Psoas muscle (tissue), 8 donors: ENCODE measurements at regions of chr2 and their contacts with region 1.

Region 1: GRCh38 chr2:102063941-102064678 is 72.3 kb downstream of the IL1R2 start:
- DNase-seq: peak; percentile 92 to 94
- ATAC-seq: peak; percentile 86 to 91 (median 88)
- H3K4me3 ChIP-seq: peak overlapping the region; percentile 39
- H3K27ac ChIP-seq: peak overlapping the region; percentile 95
- H3K4me1 ChIP-seq: peaks cover 74% of the 10 kb centered on the region
- H3K27me3 ChIP-seq: no peaks in the 10 kb centered on the region
- CTCF ChIP-seq: no peak

Region 2: DNA sequence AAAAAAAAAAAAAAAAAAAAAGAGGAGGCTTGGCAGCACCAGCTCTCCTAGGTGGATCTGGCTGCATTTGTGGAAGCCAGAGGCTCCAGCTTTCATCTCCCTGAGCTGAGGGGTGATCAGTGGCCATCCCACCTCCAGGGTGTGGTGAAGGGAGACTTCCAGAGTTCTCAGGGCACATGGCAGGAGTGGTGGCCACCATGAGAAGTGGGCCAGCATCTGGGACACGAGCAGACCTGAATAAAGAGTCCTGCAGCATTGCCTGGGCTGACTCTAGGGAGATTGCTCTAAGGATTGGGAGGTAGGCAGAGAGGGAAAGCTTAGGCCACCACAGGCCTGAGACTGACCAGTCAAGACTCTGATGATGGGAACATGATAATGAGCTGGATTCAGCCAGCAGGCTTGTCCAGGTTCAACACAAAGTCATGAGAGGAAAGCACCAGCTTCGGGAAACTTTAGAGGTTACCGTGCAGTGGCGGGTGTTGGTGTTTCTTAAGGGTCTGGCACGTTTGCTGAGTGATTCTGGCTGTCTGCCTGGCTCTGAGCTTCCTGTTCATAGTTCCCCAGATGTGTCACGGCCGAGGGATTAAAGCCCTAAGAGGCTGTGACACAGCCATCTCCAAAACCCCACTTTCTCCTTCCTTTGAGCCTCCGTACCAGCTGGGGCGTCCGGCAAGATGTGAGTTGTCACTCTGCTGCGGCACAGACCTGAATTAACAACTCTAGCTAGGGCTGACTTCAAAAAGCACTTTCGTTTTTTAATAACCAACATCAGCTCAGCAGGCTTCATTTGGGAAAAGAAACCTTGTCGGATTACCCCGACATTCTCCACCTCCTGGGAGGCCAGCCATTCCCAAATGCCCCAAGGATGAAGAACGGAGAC is 40.1 kb after region 1 on chr2:
- intact Hi-C with region 1: loop called (anchors 5 kb)
- DNase-seq: peak; percentile 82 to 90
- ATAC-seq: peak; percentile 79 to 93 (median 85)
- H3K4me3 ChIP-seq: peak overlapping the region; percentile 62
- H3K27ac ChIP-seq: peak overlapping the region; percentile 81
- H3K4me1 ChIP-seq: peaks cover 41% of the 10 kb centered on the region
- H3K27me3 ChIP-seq: no peaks in the 10 kb centered on the region
- CTCF ChIP-seq: no peak

Region 3: DNA sequence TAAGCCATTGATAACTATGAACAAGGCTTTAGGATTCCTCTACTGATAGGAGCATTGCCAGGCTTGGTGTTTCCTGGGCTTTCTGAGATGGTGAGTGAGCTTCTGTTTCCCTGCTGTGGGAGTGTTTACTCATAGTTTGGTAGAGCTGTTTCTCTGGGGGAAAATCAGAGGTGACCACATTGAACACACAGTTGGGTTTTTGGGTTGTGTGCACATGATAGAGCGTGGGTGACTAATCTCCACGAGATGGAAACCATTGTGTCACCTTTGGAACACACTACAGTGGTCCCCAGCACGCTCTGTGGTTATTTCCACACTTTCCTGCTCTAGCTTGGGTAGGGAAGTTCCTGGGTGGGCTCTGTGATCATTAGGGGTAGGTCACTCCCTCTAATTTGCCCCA is 83.8 kb after region 1 on chr2:
- intact Hi-C with region 1: no loop called
- DNase-seq: no peak
- ATAC-seq: peak in 1 of 4 donors; percentile 4
- H3K4me3 ChIP-seq: no peak overlapping the region
- H3K27ac ChIP-seq: no peak overlapping the region
- H3K4me1 ChIP-seq: peaks cover 6% of the 10 kb centered on the region
- H3K27me3 ChIP-seq: no peaks in the 10 kb centered on the region
- CTCF ChIP-seq: no peak

Region 4: GRCh38 chr2:102166189-102166845 is 102.2 kb after region 1 on chr2:
- intact Hi-C with region 1: loop called in 1 of 2 experiments (anchors 5 kb)
- DNase-seq: no peak
- ATAC-seq: peak; percentile 83 to 98 (median 88)
- H3K4me3 ChIP-seq: no peak overlapping the region
- H3K27ac ChIP-seq: no peak overlapping the region
- H3K4me1 ChIP-seq: peaks cover 15% of the 10 kb centered on the region
- H3K27me3 ChIP-seq: no peaks in the 10 kb centered on the region
- CTCF ChIP-seq: peak; percentile 68